ENCODE measurements at regions of chr12 and their contacts with region 1.

Region 1: DNA sequence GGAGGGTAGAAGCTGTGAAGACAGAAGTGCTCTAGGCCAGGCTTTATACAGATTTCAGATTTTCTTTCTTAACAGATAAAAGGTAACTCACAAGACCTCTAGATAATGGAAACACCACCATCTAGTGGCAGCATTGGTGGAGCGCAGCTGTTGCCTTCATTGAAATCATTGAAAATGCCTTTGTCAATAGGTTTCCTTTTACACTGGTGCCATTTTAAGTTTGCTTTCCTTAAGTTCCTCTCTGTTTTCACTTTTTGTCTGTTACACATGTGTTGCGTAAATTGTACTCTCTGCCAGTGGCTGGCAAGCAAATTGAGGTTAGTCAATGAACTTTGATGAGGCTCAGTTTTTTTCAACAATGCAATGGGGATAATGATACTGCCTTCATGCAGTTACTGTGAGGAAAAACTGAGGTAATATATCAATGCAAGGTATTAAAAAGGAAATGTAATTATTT is 31.1 kb downstream of the ALDH1L2 start:
- DNase-seq: peak; percentile 63 to 85 (median 68)
- ATAC-seq: peak; percentile 94
- H3K4me3 ChIP-seq: no peak overlapping the region
- H3K4me3 Mint-ChIP-seq: no peak overlapping the region
- H3K27ac ChIP-seq: no peak overlapping the region
- H3K27ac Mint-ChIP-seq: no peak overlapping the region
- H3K4me1 ChIP-seq: no peaks in the 10 kb centered on the region
- H3K4me1 Mint-ChIP-seq: no peaks in the 10 kb centered on the region
- H3K27me3 ChIP-seq: no peaks in the 10 kb centered on the region
- H3K27me3 Mint-ChIP-seq: no peaks in the 10 kb centered on the region
- CTCF ChIP-seq: peak; percentile 95

Region 2: DNA sequence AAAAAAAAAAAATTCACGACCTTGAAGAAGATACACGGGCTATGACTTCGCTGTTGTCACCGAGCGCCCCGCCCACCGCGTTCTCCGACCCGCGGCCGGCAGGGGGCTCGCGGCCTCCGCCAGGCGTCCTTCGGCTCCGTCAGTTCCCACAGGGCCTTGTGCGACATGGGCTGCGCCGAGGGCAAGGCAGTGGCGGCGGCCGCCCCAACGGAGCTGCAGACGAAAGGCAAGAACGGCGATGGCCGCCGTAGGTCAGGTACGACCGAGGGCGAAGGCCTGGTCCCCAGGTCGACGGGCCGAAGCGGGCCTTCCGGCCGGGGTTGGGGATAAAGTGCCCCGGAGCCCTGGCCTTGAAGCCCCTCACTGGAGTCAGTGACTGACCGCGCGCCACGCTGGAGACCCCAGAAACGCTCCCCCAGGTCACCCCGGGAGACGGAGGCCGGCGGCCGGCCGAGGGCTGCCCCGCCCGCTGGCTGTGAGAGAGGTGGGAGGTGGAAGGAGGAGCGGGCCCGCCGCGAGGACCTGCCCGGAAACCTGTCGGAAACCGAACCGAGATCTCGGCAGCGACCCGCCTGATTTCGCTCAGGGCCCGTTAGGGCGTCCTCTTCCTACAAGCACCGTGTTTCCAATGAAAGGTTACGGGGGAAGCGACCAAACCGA is 837.4 kb before region 1 on chr12 and contains the start of gene TXNRD1:
- CTCF ChIA-PET with region 1: no interaction called
- POLR2A ChIA-PET with region 1: no interaction called
- intact Hi-C with region 1: loop called (anchors 1 to 5 kb)
- DNase-seq: peak; percentile 68 to 93 (median 82)
- ATAC-seq: peak; percentile 87
- H3K4me3 ChIP-seq: peak within 1 kb of the TSS; percentile 67
- H3K4me3 Mint-ChIP-seq: peak within 1 kb of the TSS; percentile 88
- H3K27ac ChIP-seq: no peak within 1 kb of the TSS
- H3K27ac Mint-ChIP-seq: peak within 1 kb of the TSS; percentile 20
- H3K4me1 ChIP-seq: peaks cover 18% of the 10 kb centered on the region
- H3K4me1 Mint-ChIP-seq: peaks cover 30% of the 10 kb centered on the region
- H3K27me3 ChIP-seq: no peaks in the 10 kb centered on the region
- H3K27me3 Mint-ChIP-seq: no peaks in the 10 kb centered on the region
- CTCF ChIP-seq: peak; percentile 91
- total RNA-seq, gene TXNRD1: 24.6 to 27.2 TPM

Region 3: DNA sequence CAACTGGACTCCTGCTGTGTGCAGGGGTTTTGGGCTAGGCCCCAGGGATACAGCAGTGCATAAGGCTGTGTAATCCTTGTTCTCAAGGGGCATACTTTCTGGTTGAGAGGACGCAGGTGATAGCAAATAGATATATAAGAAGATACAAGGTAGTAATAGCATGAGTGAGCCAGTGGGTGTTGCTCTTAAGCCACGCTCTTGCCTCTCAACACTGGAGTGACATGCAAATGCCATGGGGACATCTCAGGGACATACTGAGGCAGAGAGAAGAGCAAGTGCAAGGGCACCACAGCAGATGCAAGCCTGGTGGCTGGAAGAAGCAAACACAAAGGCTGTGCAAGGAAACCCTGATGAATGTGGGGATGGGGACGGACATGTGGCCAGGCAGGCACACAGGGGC is 373.1 kb before region 1 on chr12:
- CTCF ChIA-PET with region 1: no interaction called
- POLR2A ChIA-PET with region 1: no interaction called
- intact Hi-C with region 1: loop called (anchors 1 to 2 kb)
- DNase-seq: peak in 9 of 14 experiments; percentile 13 to 71 (median 25)
- ATAC-seq: peak; percentile 56
- H3K4me3 ChIP-seq: no peak overlapping the region
- H3K4me3 Mint-ChIP-seq: peak overlapping the region; percentile 43
- H3K27ac ChIP-seq: no peak overlapping the region
- H3K27ac Mint-ChIP-seq: peak overlapping the region; percentile 74
- H3K4me1 ChIP-seq: peaks cover 52% of the 10 kb centered on the region
- H3K4me1 Mint-ChIP-seq: peaks cover 59% of the 10 kb centered on the region
- H3K27me3 ChIP-seq: no peaks in the 10 kb centered on the region
- H3K27me3 Mint-ChIP-seq: no peaks in the 10 kb centered on the region
- CTCF ChIP-seq: no peak

Region 4: GRCh38 chr12:104958009-104958945 is 94.9 kb before region 1 on chr12 and contains the start of gene SLC41A2:
- CTCF ChIA-PET with region 1: interaction called, 9 read pairs
- POLR2A ChIA-PET with region 1: interaction called, 3 read pairs
- intact Hi-C with region 1: loop called in 1 of 2 experiments (anchors 5 kb)
- DNase-seq: peak; percentile 53 to 93 (median 72)
- ATAC-seq: peak; percentile 95
- H3K4me3 ChIP-seq: peak within 1 kb of the TSS; percentile 63
- H3K4me3 Mint-ChIP-seq: peak within 1 kb of the TSS; percentile 99
- H3K27ac ChIP-seq: no peak within 1 kb of the TSS
- H3K27ac Mint-ChIP-seq: peak within 1 kb of the TSS; percentile 93
- H3K4me1 ChIP-seq: peaks cover 15% of the 10 kb centered on the region
- H3K4me1 Mint-ChIP-seq: peaks cover 26% of the 10 kb centered on the region
- H3K27me3 ChIP-seq: no peaks in the 10 kb centered on the region
- H3K27me3 Mint-ChIP-seq: peaks cover 7% of the 10 kb centered on the region
- CTCF ChIP-seq: peak; percentile 19
- total RNA-seq, gene SLC41A2: 1.2 to 1.7 TPM

Region 5: DNA sequence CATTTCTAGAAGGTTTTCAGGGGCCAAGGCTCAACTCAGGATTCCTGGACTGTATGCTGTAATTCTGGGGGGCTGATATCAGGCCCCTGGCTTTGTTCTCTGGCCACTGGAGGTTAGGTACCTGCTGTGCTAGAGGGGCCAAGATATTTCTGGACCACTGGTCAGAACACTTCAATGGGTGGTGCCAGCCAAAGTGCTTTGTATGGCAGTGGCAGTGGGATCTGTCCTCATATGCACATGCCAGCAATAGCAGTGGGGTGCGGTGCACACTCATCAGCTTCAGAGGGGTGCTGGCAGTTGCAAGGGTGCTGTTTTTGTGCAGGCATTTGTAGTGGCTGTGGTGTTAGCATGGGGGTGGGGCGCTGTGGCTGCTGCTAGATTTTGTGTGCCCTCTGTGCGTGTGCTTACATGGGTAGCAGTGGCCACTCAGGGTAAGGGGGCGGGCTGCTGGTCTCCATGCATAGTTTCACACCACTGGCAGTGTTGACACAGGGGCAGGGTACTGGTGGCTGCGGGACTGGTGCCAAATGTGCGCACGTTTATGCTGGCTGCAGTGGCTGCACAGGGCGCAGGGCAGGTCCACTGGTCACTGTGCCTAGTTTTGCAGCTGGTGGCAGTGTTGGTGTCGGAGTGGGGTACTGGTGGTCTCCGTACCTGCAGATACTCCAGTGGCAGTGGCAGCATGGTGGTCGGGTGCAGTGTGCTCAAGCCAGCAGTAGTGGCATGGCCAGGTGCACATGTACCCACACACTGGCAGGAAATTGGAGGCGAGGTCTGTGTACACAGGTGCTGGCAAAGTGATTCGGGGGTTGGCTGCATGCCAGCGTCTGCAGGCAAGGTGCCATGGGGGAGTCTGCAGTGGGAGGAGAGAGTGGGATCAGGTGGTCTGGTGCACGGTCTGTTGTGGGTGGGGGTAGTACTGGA is 54.5 kb before region 1 on chr12:
- CTCF ChIA-PET with region 1: no interaction called
- POLR2A ChIA-PET with region 1: no interaction called
- intact Hi-C with region 1: no loop called
- DNase-seq: no peak
- ATAC-seq: no peak
- H3K4me3 ChIP-seq: no peak overlapping the region
- H3K4me3 Mint-ChIP-seq: no peak overlapping the region
- H3K27ac ChIP-seq: no peak overlapping the region
- H3K27ac Mint-ChIP-seq: no peak overlapping the region
- H3K4me1 ChIP-seq: no peaks in the 10 kb centered on the region
- H3K4me1 Mint-ChIP-seq: peaks cover 13% of the 10 kb centered on the region
- H3K27me3 ChIP-seq: no peaks in the 10 kb centered on the region
- H3K27me3 Mint-ChIP-seq: no peaks in the 10 kb centered on the region
- CTCF ChIP-seq: no peak